SK-N-SH (cell line): ENCODE measurements at regions of chr12 and their contacts with region 1.

Region 1: GRCh38 chr12:49636979-49637755 is 13.8 kb downstream of the PRPF40B start:
- DNase-seq: peak; percentile 87
- H3K4me3 ChIP-seq: no peak overlapping the region
- H3K27ac ChIP-seq: peak overlapping the region; percentile 55 to 82
- H3K4me1 ChIP-seq: peaks cover 0 to 14% of the 10 kb centered on the region in 2 experiments; a peak in 2 of 4 replicates
- H3K27me3 ChIP-seq: no peaks in the 10 kb centered on the region
- CTCF ChIP-seq: peak; percentile 74
- EP300 ChIP-seq: no peak
- RAD21 ChIP-seq: peak; percentile 72

Region 2: DNA sequence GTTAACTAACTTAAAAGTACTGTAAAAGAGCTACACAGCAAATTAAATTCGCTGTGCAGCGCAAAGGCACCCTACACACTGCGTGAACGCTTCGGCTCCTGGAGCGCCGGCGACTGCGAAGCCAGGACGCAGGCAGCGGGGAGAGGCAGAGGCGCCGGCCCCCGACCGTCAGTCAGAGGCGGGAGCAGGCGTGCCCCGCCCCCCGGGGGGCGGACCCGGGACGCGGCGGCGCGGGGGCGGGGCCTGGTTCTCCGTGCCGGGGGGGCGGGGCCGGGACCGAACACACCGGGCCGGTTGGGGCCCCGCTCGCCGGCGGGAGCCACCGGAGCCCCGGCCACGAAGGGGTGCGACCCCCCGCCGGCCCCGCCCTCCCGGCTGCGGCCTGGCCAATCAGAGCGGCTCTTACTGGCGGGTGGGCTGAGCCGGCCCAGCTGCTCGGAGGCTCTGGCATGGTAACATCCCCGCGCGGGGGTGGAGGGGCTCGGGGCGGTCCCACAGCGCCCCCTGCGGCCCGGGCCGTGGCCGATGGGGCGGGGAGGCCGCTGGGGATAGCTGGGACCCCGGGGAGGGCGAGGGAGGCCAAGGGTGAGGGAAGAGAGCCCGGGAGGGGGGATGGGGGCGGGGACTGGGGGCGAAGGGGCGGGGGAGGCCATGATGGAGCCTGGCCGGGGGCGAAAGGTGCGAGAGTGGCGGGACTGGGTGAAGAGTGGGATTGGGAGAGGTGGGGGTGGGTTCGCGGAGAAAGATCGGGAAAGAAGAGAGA is 13.8 kb before region 1 on chr12 and contains the start of gene PRPF40B:
- CTCF ChIA-PET with region 1: interaction called, 102 read pairs
- POLR2A ChIA-PET with region 1: interaction called, 10 read pairs
- DNase-seq: peak; percentile 99
- H3K4me3 ChIP-seq: peak within 1 kb of the TSS; percentile 63 to 67
- H3K27ac ChIP-seq: peak within 1 kb of the TSS; percentile 79 to 86
- H3K4me1 ChIP-seq: peaks cover 14 to 43% of the 10 kb centered on the region in 2 experiments; a peak in 3 of 4 replicates
- H3K27me3 ChIP-seq: no peaks in the 10 kb centered on the region
- CTCF ChIP-seq: peak; percentile 42
- EP300 ChIP-seq: 0 out of 4 replicates have a peak, but pooled peaks of 1 of the 2 experiments have one; percentile 33
- RAD21 ChIP-seq: peak; percentile 18; the same call in 1 of the 2 replicates
- polyA plus RNA-seq, gene PRPF40B: 24.3 and 27.0 TPM in 2 replicates

Region 3: DNA sequence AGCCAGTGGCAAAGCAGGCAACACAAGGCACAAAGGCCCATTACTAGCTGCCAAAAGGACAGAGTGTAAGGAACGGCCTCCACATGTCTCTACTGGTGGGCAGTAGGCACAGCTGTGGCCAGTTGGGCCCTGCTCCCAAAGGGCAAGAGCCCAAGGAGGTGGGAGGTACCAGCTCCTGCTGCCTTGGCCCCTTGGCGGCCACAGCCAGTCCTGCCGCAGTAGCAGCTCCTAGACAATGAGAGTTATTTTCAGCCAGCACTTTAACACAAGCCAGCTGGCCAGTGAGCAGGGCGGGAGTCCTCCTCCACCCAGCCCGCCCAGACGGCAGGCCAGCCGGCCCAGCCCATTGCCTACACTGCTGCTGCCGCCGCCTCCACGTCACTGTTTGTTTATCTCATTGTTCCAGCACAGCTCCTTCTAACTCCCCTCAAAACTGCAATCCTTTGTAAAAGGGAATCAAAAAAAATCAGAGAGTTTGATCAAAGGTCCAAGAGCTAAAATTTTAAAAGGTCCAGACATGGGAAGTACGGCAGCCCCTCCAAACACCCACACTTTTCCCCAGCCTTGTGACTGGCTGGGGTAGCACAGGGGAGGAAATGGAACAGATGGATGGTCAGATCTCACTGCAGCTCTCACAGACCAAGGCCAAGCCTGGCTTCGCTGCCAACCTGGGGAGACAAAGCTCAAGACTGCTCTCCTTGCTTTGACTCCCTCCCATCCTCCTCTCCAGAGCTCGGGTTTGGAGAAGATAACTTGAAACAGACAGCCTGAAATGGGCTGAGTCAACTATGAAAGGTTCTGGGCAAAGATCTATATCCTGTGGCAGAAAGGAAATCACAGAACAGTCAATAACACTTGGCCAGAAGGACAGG is 36.5 kb after region 1 on chr12:
- CTCF ChIA-PET with region 1: interaction called, 19 read pairs
- POLR2A ChIA-PET with region 1: interaction called, 3 read pairs
- DNase-seq: peak; percentile 89
- H3K4me3 ChIP-seq: peak overlapping the region in 1 of 2 experiments; percentile 46; a peak in 2 of 4 replicates
- H3K27ac ChIP-seq: peak overlapping the region; percentile 96 to 98
- H3K4me1 ChIP-seq: peaks cover 34 to 49% of the 10 kb centered on the region in 2 experiments
- H3K27me3 ChIP-seq: no peaks in the 10 kb centered on the region
- CTCF ChIP-seq: peak; percentile 44
- EP300 ChIP-seq: peak; percentile 17 to 43; a peak in 2 of 4 replicates
- RAD21 ChIP-seq: no peak

Region 4: GRCh38 chr12:49707128-49707811 is 70.1 kb after region 1 on chr12 and contains the start of gene FMNL3:
- CTCF ChIA-PET with region 1: interaction called, 590 read pairs
- POLR2A ChIA-PET with region 1: interaction called, 3 read pairs
- DNase-seq: peak; percentile 99
- H3K4me3 ChIP-seq: peak within 1 kb of the TSS; percentile 83 to 96
- H3K27ac ChIP-seq: peak within 1 kb of the TSS; percentile 79 to 88
- H3K4me1 ChIP-seq: peaks cover 25 to 28% of the 10 kb centered on the region in 2 experiments; a peak in 3 of 4 replicates
- H3K27me3 ChIP-seq: no peaks in the 10 kb centered on the region
- CTCF ChIP-seq: peak; percentile 93
- EP300 ChIP-seq: 0 out of 4 replicates have a peak, but pooled peaks of 1 of the 2 experiments have one; percentile 25
- RAD21 ChIP-seq: peak; percentile 95
- polyA plus RNA-seq, gene FMNL3: 10.2 and 13.1 TPM in 2 replicates

Region 5: GRCh38 chr12:49763006-49763591 is 125.9 kb after region 1 on chr12:
- CTCF ChIA-PET with region 1: interaction called, 17 read pairs
- POLR2A ChIA-PET with region 1: no interaction called
- DNase-seq: peak; percentile 72
- H3K4me3 ChIP-seq: no peak overlapping the region
- H3K27ac ChIP-seq: no peak overlapping the region
- H3K4me1 ChIP-seq: no peaks in the 10 kb centered on the region
- H3K27me3 ChIP-seq: no peaks in the 10 kb centered on the region
- CTCF ChIP-seq: peak; percentile 82
- EP300 ChIP-seq: no peak
- RAD21 ChIP-seq: peak; percentile 36

Region 6: GRCh38 chr12:49842519-49843352 is 205.6 kb after region 1 on chr12 and contains the start of gene BCDIN3D:
- CTCF ChIA-PET with region 1: interaction called, 16 read pairs
- POLR2A ChIA-PET with region 1: no interaction called
- DNase-seq: peak; percentile 92
- H3K4me3 ChIP-seq: peak within 1 kb of the TSS; percentile 62 to 86
- H3K27ac ChIP-seq: peak within 1 kb of the TSS; percentile 92 to 94
- H3K4me1 ChIP-seq: peaks cover 11 to 18% of the 10 kb centered on the region in 2 experiments; a peak in 3 of 4 replicates
- H3K27me3 ChIP-seq: no peaks in the 10 kb centered on the region; the same call in 1 of the 2 replicates
- CTCF ChIP-seq: no peak
- EP300 ChIP-seq: no peak
- RAD21 ChIP-seq: no peak
- polyA plus RNA-seq, gene BCDIN3D: 2.3 and 3.8 TPM in 2 replicates

Region 7: DNA sequence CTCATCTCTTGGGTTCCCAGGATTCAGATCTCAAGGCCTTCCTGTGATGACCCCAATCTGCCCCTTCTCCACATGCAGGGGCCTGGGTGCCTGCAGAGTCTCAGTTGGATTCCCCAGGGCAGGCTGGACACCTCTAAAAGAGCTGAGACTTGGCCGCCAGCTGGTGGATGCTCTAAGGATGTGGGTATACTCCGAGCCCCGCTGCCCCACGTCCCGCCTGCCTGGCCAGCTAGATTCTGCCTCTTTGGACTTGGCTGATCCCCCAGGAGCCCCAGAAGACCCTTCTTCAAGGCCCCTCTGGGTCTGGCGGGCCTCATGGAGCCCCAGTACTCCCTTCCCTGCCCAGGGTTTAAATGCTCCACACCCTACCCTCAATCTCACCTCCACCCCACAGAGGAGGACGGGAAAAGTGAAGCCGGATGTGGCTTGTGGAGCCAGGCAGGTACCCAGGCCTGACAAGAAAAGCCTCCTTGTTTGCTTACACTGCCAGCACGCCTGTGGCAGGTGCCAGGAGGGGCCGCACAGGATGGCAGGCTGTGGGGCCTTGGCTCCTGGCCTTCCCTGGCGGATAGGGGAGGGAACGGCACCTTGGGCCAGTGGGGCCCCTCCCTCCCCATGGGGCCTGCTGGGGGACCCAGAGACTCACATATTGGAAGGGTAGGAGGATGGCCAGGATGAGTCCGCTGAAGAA is 251.4 kb after region 1 on chr12:
- CTCF ChIA-PET with region 1: no interaction called
- POLR2A ChIA-PET with region 1: no interaction called
- DNase-seq: no peak
- H3K4me3 ChIP-seq: no peak overlapping the region
- H3K27ac ChIP-seq: no peak overlapping the region
- H3K4me1 ChIP-seq: peaks cover 0 to 26% of the 10 kb centered on the region in 2 experiments; a peak in 1 of 4 replicates
- H3K27me3 ChIP-seq: no peaks in the 10 kb centered on the region
- CTCF ChIP-seq: no peak
- EP300 ChIP-seq: no peak
- RAD21 ChIP-seq: no peak